Posterior vena cava (tissue), 2 donors: ENCODE measurements at regions of chr4 and their contacts with region 1.

Region 1: DNA sequence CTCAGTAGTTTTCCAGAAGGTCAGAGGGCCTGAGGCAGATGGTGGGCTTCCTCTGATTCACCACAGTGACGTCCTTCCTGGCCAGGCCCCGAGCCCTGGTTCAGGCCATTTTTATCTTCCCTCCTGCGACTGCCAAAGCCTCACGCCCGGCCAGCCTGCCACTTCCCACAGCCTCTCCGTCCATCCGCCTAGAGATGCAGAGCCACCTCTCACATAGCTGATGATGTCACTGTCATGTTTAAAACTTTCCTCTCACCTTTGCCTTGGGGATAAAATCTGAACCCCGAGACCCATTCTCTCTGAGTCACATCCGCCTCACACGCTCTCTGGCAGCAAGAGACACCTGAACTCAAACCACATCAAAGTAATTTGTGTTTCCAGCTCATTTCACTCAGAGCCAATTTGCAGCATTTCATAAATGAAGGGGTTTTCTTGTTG is 175.3 kb downstream of the QDPR start:
- DNase-seq: peak; percentile 83

Region 2: GRCh38 chr4:16516796-16517439 is 819.6 kb before region 1 on chr4:
- intact Hi-C with region 1: loop called in 1 of 2 experiments (anchors 10 kb)
- DNase-seq: no peak

Region 3: DNA sequence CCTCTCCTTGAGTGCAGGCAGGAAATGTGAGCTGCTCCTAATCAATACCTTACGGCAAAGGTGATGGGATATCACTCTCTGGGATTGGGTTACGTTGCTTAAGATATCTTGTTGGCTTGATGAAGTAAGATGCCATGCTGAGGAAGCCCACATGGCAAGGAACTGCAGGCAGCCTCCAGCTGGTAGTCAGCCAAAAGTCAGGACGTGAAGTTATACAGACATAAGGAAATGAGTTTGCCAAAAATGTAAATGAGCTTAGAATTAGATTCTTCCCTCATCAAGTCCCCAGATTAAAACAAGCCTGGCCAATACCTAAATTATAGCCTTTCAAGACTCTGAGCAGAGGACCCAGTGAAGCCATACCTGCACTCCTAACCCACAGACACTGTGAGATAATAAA is 20.4 kb after region 1 on chr4:
- intact Hi-C with region 1: no loop called
- DNase-seq: no peak

Region 4: GRCh38 chr4:18007625-18008024 is 671.1 kb after region 1 on chr4:
- intact Hi-C with region 1: loop called in 1 of 2 experiments (anchors 5 kb)
- DNase-seq: no peak